B cell (primary cell): ENCODE measurements at regions of chr5 and their contacts with region 1.

Region 1: DNA sequence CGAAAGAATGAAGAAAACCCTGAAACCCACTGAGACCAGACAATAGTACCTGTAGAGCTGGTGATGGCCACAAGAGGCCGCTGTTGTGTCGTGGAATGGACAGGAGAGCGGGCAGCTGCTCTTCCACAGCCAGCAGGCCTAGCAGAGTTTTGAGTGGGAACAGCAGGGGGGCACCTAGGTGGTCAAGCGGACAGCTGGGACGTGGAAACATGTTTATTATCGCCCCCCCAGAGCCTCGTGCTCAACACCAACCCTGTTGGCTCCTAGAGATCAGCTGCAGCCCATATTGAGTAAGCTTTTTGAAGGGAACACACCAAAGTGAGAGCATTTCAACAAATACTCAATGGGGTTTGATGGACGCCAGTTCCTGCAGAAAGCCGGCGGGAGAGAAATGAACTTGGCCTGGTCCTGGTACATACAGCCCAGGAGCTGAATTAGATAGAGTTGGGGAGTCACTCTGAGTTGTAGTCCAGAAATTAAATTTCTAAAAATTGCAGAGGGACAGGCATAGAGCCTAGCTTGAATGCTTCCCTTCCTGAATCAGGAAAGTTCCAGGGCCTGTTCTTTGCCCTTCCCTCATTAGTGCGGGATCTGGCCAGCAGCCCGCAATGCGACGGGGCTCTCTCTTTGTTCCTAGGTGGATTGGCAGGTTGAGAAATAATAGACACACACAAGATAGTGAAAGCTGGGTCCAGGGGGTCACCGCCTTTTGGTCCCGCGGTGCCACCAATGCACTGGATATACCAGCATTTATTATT is 33.8 kb downstream of the MFAP3 start:
- DNase-seq: peak; percentile 84
- ATAC-seq: peak; percentile 98
- H3K4me3 ChIP-seq: no peak overlapping the region
- H3K4me3 Mint-ChIP-seq: no peak overlapping the region
- H3K27ac ChIP-seq: no peak overlapping the region
- H3K27ac Mint-ChIP-seq: no peak overlapping the region
- H3K4me1 ChIP-seq: peaks cover 2 to 3% of the 10 kb centered on the region in 2 donors
- H3K4me1 Mint-ChIP-seq: peaks cover 3% of the 10 kb centered on the region
- H3K27me3 ChIP-seq: no peaks in the 10 kb centered on the region
- H3K27me3 Mint-ChIP-seq: peaks cover 44% of the 10 kb centered on the region
- CTCF ChIP-seq: peak; percentile 98

Region 2: GRCh38 chr5:154058055-154059038 is 14.2 kb before region 1 on chr5:
- CTCF ChIA-PET with region 1: interaction called, 46 read pairs
- POLR2A ChIA-PET with region 1: no interaction called
- intact Hi-C with region 1: no loop called
- DNase-seq: no peak
- ATAC-seq: peak; percentile 21
- H3K4me3 ChIP-seq: no peak overlapping the region
- H3K4me3 Mint-ChIP-seq: peak overlapping the region; percentile 4
- H3K27ac ChIP-seq: no peak overlapping the region
- H3K27ac Mint-ChIP-seq: no peak overlapping the region
- H3K4me1 ChIP-seq: peaks cover 11 to 19% of the 10 kb centered on the region in 2 donors
- H3K4me1 Mint-ChIP-seq: peaks cover 24% of the 10 kb centered on the region
- H3K27me3 ChIP-seq: no peaks in the 10 kb centered on the region
- H3K27me3 Mint-ChIP-seq: no peaks in the 10 kb centered on the region
- CTCF ChIP-seq: no peak

Region 3: DNA sequence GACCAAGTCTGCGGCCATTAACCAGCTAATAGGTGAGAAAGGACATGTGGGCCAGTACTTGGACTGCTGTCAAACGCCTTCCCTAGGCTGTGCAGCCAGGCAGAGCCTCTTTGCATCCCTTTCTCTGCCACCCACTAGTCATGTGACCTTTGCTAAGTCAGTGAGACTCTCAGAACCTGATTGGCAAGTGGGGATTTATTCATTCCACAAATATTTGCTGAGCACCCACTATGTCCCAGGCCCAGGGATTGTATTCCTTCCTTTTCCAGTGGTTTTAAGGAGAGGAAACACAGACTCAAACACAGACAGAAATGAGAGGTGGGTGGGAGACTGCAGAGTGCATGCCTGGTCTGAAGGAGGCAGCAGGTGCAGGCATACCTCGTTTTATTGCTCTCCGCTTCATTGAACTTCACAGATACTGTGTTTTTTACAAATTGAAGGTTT is 46.3 kb after region 1 on chr5:
- CTCF ChIA-PET with region 1: no interaction called
- POLR2A ChIA-PET with region 1: no interaction called
- intact Hi-C with region 1: no loop called
- DNase-seq: peak; percentile 12
- ATAC-seq: peak; percentile 41
- H3K4me3 ChIP-seq: no peak overlapping the region
- H3K4me3 Mint-ChIP-seq: no peak overlapping the region
- H3K27ac ChIP-seq: no peak overlapping the region
- H3K27ac Mint-ChIP-seq: no peak overlapping the region
- H3K4me1 ChIP-seq: peaks cover 3 to 11% of the 10 kb centered on the region in 2 donors
- H3K4me1 Mint-ChIP-seq: peaks cover 15% of the 10 kb centered on the region
- H3K27me3 ChIP-seq: peaks cover 0 to 35% (median 8%) of the 10 kb centered on the region in 4 experiments
- H3K27me3 Mint-ChIP-seq: peaks cover 41% of the 10 kb centered on the region
- CTCF ChIP-seq: no peak

Region 4: GRCh38 chr5:154133591-154133990 is 61.0 kb after region 1 on chr5:
- CTCF ChIA-PET with region 1: no interaction called
- POLR2A ChIA-PET with region 1: no interaction called
- intact Hi-C with region 1: no loop called
- DNase-seq: no peak
- ATAC-seq: no peak
- H3K4me3 ChIP-seq: no peak overlapping the region
- H3K4me3 Mint-ChIP-seq: no peak overlapping the region
- H3K27ac ChIP-seq: no peak overlapping the region
- H3K27ac Mint-ChIP-seq: no peak overlapping the region
- H3K4me1 ChIP-seq: no peaks in the 10 kb centered on the region
- H3K4me1 Mint-ChIP-seq: no peaks in the 10 kb centered on the region
- H3K27me3 ChIP-seq: no peaks in the 10 kb centered on the region
- H3K27me3 Mint-ChIP-seq: peaks cover 6% of the 10 kb centered on the region
- CTCF ChIP-seq: no peak

Region 5: GRCh38 chr5:154174091-154174490 is 101.5 kb after region 1 on chr5:
- CTCF ChIA-PET with region 1: interaction called, 24 read pairs
- POLR2A ChIA-PET with region 1: no interaction called
- intact Hi-C with region 1: no loop called
- DNase-seq: no peak
- ATAC-seq: no peak
- H3K4me3 ChIP-seq: no peak overlapping the region
- H3K4me3 Mint-ChIP-seq: no peak overlapping the region
- H3K27ac ChIP-seq: no peak overlapping the region
- H3K27ac Mint-ChIP-seq: no peak overlapping the region
- H3K4me1 ChIP-seq: no peaks in the 10 kb centered on the region
- H3K4me1 Mint-ChIP-seq: no peaks in the 10 kb centered on the region
- H3K27me3 ChIP-seq: no peaks in the 10 kb centered on the region
- H3K27me3 Mint-ChIP-seq: peaks cover 14% of the 10 kb centered on the region
- CTCF ChIP-seq: no peak

Region 6: DNA sequence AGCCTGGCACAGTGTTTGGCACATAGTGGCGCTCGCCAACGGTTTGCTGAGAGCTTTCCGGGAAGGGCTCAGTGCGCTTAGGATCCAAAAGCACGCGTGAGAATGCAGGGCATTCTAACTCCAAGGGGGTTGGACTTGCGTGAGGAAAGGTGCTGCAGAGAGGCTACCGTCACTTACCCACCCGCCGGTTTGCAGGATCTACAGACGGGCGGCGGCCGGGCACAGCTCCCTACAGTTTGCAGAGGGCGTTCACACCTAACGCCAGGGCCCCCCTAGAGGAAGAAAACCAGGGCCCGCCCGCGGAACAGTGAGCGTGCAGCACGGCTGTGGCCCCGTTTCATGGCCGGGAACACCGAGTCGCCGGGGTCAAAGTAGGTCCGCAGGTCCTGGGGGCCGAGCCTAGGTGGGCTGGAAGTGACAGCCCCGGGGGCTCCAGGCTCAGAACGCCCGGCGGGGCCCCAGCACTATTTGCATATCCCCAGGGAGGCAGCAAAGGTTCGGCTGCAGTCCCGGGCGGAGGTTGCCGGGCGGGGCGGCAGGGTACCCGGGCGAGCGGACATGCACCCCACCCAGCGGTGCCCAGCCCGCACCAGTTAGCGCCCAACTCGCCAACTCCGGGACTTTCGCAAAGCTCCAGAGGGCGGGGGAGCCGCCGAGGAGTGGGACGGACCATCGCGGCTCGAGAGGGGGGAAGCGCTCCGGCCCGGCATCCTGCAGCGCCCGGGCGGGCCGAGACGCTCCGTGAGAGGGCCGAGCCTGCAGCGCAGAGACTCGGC is 117.4 kb after region 1 on chr5:
- CTCF ChIA-PET with region 1: interaction called, 13 read pairs
- POLR2A ChIA-PET with region 1: interaction called, 3 read pairs
- intact Hi-C with region 1: no loop called
- DNase-seq: peak; percentile 94
- ATAC-seq: peak; percentile 85
- H3K4me3 ChIP-seq: peak overlapping the region; percentile 74 to 84 (median 82)
- H3K4me3 Mint-ChIP-seq: peak overlapping the region; percentile 92
- H3K27ac ChIP-seq: peak overlapping the region; percentile 75 to 78
- H3K27ac Mint-ChIP-seq: peak overlapping the region; percentile 90
- H3K4me1 ChIP-seq: peaks cover 23 to 31% of the 10 kb centered on the region in 2 donors
- H3K4me1 Mint-ChIP-seq: peaks cover 48% of the 10 kb centered on the region
- H3K27me3 ChIP-seq: no peaks in the 10 kb centered on the region
- H3K27me3 Mint-ChIP-seq: no peaks in the 10 kb centered on the region
- CTCF ChIP-seq: peak; percentile 71

Region 7: GRCh38 chr5:154384480-154385235 is 312.1 kb after region 1 on chr5:
- CTCF ChIA-PET with region 1: interaction called, 13 read pairs
- POLR2A ChIA-PET with region 1: no interaction called
- intact Hi-C with region 1: no loop called
- DNase-seq: peak; percentile 89
- ATAC-seq: peak; percentile 86
- H3K4me3 ChIP-seq: peak overlapping the region in 4 of 5 experiments; percentile 18 to 56 (median 26)
- H3K4me3 Mint-ChIP-seq: peak overlapping the region; percentile 87
- H3K27ac ChIP-seq: peak overlapping the region; percentile 88 to 95
- H3K27ac Mint-ChIP-seq: peak overlapping the region; percentile 94
- H3K4me1 ChIP-seq: peaks cover 25 to 32% of the 10 kb centered on the region in 2 donors
- H3K4me1 Mint-ChIP-seq: peaks cover 31% of the 10 kb centered on the region
- H3K27me3 ChIP-seq: no peaks in the 10 kb centered on the region
- H3K27me3 Mint-ChIP-seq: no peaks in the 10 kb centered on the region
- CTCF ChIP-seq: no peak

Region 8: GRCh38 chr5:154467655-154468354 is 395.2 kb after region 1 on chr5:
- CTCF ChIA-PET with region 1: interaction called, 6 read pairs
- POLR2A ChIA-PET with region 1: no interaction called
- intact Hi-C with region 1: loop called (anchors 1 kb)
- DNase-seq: peak; percentile 79
- ATAC-seq: peak; percentile 86
- H3K4me3 ChIP-seq: no peak overlapping the region
- H3K4me3 Mint-ChIP-seq: no peak overlapping the region
- H3K27ac ChIP-seq: no peak overlapping the region
- H3K27ac Mint-ChIP-seq: no peak overlapping the region
- H3K4me1 ChIP-seq: peaks cover 0 to 10% of the 10 kb centered on the region in 2 donors
- H3K4me1 Mint-ChIP-seq: no peaks in the 10 kb centered on the region
- H3K27me3 ChIP-seq: peaks cover 0 to 44% (median 32%) of the 10 kb centered on the region in 4 experiments
- H3K27me3 Mint-ChIP-seq: peaks cover 39% of the 10 kb centered on the region
- CTCF ChIP-seq: peak; percentile 95